T-cell (primary cell): ENCODE measurements at regions of chr4 and their contacts with region 1.

Region 1: GRCh38 chr4:109787807-109788206 is 14.0 kb downstream of the CFI start:
- DNase-seq: no peak
- ATAC-seq: no peak
- H3K4me3 ChIP-seq: no peak overlapping the region
- H3K4me3 Mint-ChIP-seq: no peak overlapping the region
- H3K27ac ChIP-seq: no peak overlapping the region
- H3K27ac Mint-ChIP-seq: no peak overlapping the region
- H3K4me1 ChIP-seq: no peaks in the 10 kb centered on the region
- H3K4me1 Mint-ChIP-seq: no peaks in the 10 kb centered on the region
- H3K27me3 ChIP-seq: no peaks in the 10 kb centered on the region
- H3K27me3 Mint-ChIP-seq: peaks cover 2 to 4% of the 10 kb centered on the region in 2 donors

Region 2: GRCh38 chr4:108861339-108861738 is 926.5 kb before region 1 on chr4:
- CTCF ChIA-PET with region 1: no interaction called
- POLR2A ChIA-PET with region 1: no interaction called
- DNase-seq: no peak
- ATAC-seq: no peak
- H3K4me3 ChIP-seq: no peak overlapping the region
- H3K4me3 Mint-ChIP-seq: no peak overlapping the region
- H3K27ac ChIP-seq: no peak overlapping the region
- H3K27ac Mint-ChIP-seq: no peak overlapping the region
- H3K4me1 ChIP-seq: no peaks in the 10 kb centered on the region
- H3K4me1 Mint-ChIP-seq: peaks cover 0 to 9% (median 0%) of the 10 kb centered on the region in 3 donors
- H3K27me3 ChIP-seq: peaks cover 0 to 3% of the 10 kb centered on the region in 2 experiments
- H3K27me3 Mint-ChIP-seq: no peaks in the 10 kb centered on the region

Region 3: DNA sequence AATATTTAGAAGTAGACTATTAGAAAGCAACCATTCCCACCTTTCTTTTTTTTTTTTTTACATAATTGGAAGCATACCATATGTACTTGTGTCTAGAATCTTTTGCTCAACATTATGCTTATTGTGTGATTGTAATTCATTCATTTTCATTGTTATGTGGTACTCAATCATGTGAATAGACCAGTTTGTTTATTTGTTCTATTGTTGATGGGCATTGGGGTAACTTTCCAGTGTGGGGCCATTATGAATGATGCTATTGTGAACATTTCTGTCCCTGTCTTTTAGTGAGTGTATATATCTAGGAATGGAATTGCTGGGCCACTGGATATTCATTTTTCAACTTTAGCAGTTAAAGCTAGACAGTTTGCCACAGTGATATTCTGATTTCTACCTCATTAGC is 290.3 kb before region 1 on chr4:
- CTCF ChIA-PET with region 1: no interaction called
- POLR2A ChIA-PET with region 1: no interaction called
- DNase-seq: no peak
- ATAC-seq: no peak
- H3K4me3 ChIP-seq: no peak overlapping the region
- H3K4me3 Mint-ChIP-seq: no peak overlapping the region
- H3K27ac ChIP-seq: no peak overlapping the region
- H3K27ac Mint-ChIP-seq: no peak overlapping the region
- H3K4me1 ChIP-seq: no peaks in the 10 kb centered on the region
- H3K4me1 Mint-ChIP-seq: no peaks in the 10 kb centered on the region
- H3K27me3 ChIP-seq: no peaks in the 10 kb centered on the region
- H3K27me3 Mint-ChIP-seq: no peaks in the 10 kb centered on the region

Region 4: GRCh38 chr4:109721033-109721432 is 66.8 kb before region 1 on chr4:
- CTCF ChIA-PET with region 1: interaction called in 1 of 2 experiments, 11 read pairs
- POLR2A ChIA-PET with region 1: no interaction called
- DNase-seq: no peak
- ATAC-seq: no peak
- H3K4me3 ChIP-seq: no peak overlapping the region
- H3K4me3 Mint-ChIP-seq: no peak overlapping the region
- H3K27ac ChIP-seq: no peak overlapping the region
- H3K27ac Mint-ChIP-seq: no peak overlapping the region
- H3K4me1 ChIP-seq: no peaks in the 10 kb centered on the region
- H3K4me1 Mint-ChIP-seq: peaks cover 7 to 28% (median 13%) of the 10 kb centered on the region in 3 donors
- H3K27me3 ChIP-seq: no peaks in the 10 kb centered on the region
- H3K27me3 Mint-ChIP-seq: no peaks in the 10 kb centered on the region

Region 5: DNA sequence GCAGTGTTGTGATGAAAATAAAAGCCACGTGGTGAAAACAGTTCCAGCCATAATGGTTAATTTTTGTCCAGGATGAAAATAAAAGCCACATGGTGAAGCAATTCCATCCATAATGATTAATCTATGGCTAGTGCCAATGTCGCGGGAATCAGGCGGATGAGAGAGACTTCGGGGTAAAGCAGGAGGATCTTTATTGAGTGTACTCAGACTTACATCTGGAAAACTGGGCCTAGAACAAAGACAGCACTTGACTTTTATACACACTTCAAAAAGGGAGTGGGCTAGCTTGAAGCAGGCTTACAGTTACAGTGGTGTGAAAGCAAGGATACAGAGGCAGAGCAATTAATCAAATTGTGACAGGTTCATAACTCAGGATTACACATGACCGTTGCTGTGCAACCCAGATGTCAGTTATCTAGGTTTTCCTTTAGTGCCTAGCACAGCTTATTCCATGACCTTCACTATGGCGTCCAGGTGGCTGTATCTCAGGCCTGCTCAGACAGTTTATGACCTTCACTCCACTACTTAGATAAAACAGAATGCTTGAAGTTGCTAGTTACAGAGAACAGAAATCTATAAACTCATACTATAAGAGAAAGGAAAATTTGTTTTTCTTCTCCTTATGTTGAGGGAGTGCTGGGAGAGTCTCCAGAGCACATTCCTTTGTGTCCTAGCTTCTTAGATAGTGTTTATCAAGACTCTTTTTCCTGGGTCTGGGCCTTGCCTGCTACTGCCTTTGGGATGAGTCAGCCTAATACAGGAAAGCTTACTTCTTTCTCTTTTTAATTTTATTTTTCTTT is 52.0 kb before region 1 on chr4:
- CTCF ChIA-PET with region 1: no interaction called
- POLR2A ChIA-PET with region 1: no interaction called
- DNase-seq: no peak
- ATAC-seq: no peak
- H3K4me3 ChIP-seq: no peak overlapping the region
- H3K4me3 Mint-ChIP-seq: no peak overlapping the region
- H3K27ac ChIP-seq: no peak overlapping the region
- H3K27ac Mint-ChIP-seq: no peak overlapping the region
- H3K4me1 ChIP-seq: no peaks in the 10 kb centered on the region
- H3K4me1 Mint-ChIP-seq: no peaks in the 10 kb centered on the region
- H3K27me3 ChIP-seq: peaks cover 0 to 10% of the 10 kb centered on the region in 2 experiments
- H3K27me3 Mint-ChIP-seq: peaks cover 0 to 1% of the 10 kb centered on the region in 2 donors

Region 6: GRCh38 chr4:109877400-109877799 is 89.6 kb after region 1 on chr4:
- CTCF ChIA-PET with region 1: no interaction called
- POLR2A ChIA-PET with region 1: no interaction called
- DNase-seq: no peak
- ATAC-seq: no peak
- H3K4me3 ChIP-seq: no peak overlapping the region
- H3K4me3 Mint-ChIP-seq: no peak overlapping the region
- H3K27ac ChIP-seq: no peak overlapping the region
- H3K27ac Mint-ChIP-seq: no peak overlapping the region
- H3K4me1 ChIP-seq: no peaks in the 10 kb centered on the region
- H3K4me1 Mint-ChIP-seq: no peaks in the 10 kb centered on the region
- H3K27me3 ChIP-seq: peaks cover 0 to 16% of the 10 kb centered on the region in 2 experiments
- H3K27me3 Mint-ChIP-seq: peaks cover 11 to 15% of the 10 kb centered on the region in 2 donors